ENCODE measurements at regions of chr4 and their contacts with region 1.

Region 1: GRCh38 chr4:152500800-152501434 is 35.0 kb downstream of the FBXW7 start:
- DNase-seq: peak; percentile 22
- H3K4me3 Mint-ChIP-seq: no peak overlapping the region
- H3K27ac Mint-ChIP-seq: no peak overlapping the region
- H3K4me1 Mint-ChIP-seq: peaks cover 22% of the 10 kb centered on the region
- H3K27me3 Mint-ChIP-seq: no peaks in the 10 kb centered on the region

Region 2: DNA sequence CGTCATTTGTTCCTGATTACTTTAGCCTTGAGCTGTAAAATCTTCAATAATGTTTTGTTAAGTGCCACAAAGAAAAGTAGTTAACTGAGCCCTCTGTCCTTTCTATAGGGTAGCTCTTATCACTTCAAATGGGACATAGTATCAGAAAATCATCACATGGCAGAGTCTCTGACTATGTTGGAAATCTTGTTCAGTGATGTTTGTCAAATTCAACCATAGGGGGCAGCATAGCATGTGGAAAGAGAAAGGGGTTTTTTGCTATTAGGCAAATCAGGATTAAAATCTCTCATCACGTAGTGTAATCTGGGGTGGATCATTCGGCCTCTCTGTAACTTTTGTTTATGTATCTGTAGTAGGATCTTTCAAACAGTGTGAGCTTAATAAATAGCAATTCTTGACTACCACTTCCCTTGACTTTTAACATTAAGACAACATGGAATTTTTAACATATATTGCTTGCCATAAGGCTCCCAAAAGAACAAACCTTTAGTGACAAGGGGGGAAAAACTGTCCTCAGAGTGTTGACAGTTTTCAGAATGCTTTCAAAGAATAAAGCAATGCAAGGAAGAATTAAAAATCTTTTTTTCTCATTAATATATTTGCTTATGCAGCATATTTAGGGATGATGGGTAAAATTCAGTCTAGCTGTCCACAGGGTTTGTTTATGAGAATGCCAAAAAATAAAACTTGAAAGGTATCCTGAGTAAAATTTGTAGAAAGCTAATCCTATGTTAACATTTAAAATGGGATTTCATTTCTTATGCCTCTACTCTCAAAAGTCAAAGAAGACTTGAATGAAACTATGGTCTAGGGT is 92.2 kb before region 1 on chr4:
- CTCF ChIA-PET with region 1: interaction called, 9 read pairs
- POLR2A ChIA-PET with region 1: interaction called, 3 read pairs
- intact Hi-C with region 1: loop called (anchors 2 kb)
- DNase-seq: no peak
- H3K4me3 Mint-ChIP-seq: no peak overlapping the region
- H3K27ac Mint-ChIP-seq: no peak overlapping the region
- H3K4me1 Mint-ChIP-seq: peaks cover 12% of the 10 kb centered on the region
- H3K27me3 Mint-ChIP-seq: no peaks in the 10 kb centered on the region

Region 3: GRCh38 chr4:152485726-152486276 is 15.1 kb before region 1 on chr4:
- CTCF ChIA-PET with region 1: interaction called, 26 read pairs
- POLR2A ChIA-PET with region 1: no interaction called
- intact Hi-C with region 1: loop called (anchors 1 kb)
- DNase-seq: no peak
- H3K4me3 Mint-ChIP-seq: peak overlapping the region; percentile 23
- H3K27ac Mint-ChIP-seq: no peak overlapping the region
- H3K4me1 Mint-ChIP-seq: peaks cover 39% of the 10 kb centered on the region
- H3K27me3 Mint-ChIP-seq: no peaks in the 10 kb centered on the region

Region 4: DNA sequence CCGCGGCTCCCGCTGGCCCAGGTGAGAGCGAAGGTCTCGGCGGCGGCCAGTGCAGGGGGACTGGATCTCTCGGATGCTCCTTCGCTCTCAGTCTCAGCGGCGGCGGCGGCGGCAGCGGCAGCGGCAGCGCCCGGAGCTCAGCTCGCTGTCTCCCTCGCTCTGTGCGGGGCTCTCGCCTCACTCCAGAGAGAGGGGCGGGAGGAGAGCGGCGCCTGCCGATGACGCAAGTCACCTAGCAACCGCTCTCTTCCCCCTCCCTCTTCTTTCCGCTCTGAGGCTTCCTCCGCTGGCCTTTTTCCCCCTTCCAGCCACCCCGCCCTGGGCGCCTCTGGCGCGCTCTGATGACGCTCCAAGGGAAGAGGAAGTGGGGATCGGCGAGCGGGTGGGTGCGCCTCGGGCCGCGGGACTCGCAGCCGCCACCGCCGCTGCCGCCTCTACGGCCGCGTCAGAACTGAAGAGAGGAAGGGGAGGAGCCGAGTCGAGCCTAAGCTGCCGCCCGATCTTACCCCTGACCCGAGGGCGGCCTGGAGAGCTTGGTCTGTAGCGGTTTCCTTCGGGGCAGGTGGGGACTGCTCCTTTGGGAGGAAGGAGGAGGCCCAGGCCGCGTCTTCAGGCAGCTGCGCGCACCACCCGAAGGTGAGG is 35.1 kb after region 1 on chr4 and contains the start of gene FBXW7:
- CTCF ChIA-PET with region 1: interaction called, 26 read pairs
- POLR2A ChIA-PET with region 1: interaction called, 14 read pairs
- intact Hi-C with region 1: loop called (anchors 2 kb)
- DNase-seq: peak; percentile 100
- H3K4me3 Mint-ChIP-seq: peak within 1 kb of the TSS; percentile 95
- H3K27ac Mint-ChIP-seq: peak within 1 kb of the TSS; percentile 99
- H3K4me1 Mint-ChIP-seq: peaks cover 57% of the 10 kb centered on the region
- H3K27me3 Mint-ChIP-seq: no peaks in the 10 kb centered on the region
- total RNA-seq, gene FBXW7: 35.8 to 37.8 TPM

Region 5: DNA sequence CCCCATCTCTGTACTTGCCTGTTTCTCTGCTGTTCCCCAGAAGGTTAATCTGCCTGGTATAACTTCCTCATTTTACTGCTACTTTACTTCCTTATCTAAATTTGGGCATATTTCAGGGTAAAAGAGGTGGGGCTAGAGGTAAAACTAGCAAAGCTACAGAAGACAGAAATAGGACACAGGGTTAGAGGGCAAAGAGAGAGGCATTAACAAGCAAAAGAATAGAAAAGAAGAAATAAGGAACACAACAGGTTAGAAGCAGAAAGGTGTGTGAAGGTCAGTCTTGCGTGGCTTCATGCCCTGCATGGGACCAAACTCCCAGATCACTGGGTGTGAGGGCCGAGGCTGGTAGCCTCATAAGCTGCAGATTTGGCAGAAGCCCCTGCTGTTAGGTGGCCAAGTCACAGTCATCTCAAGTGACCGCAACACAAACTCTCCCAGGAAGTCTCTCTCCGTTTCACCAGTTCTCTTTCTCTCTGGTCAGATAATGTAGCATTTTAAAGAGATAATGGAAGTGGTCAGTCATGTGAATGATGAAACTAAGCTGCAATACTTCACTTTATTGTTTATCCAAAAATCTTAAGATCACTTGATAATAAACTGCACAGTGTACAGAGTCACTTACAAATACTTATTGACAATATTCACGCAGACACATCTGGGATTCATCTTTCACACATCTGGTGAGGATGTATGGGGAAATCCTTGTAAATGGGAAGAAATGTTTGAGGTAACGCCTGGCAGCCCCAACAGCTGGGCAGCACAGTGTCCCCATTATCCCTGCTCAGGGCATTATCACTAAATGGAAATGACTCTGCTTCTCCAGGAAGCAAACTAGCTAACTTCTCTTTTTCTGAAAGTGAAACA is 162.5 kb after region 1 on chr4:
- CTCF ChIA-PET with region 1: interaction called, 10 read pairs
- POLR2A ChIA-PET with region 1: interaction called, 3 read pairs
- intact Hi-C with region 1: no loop called
- DNase-seq: no peak
- H3K4me3 Mint-ChIP-seq: no peak overlapping the region
- H3K27ac Mint-ChIP-seq: no peak overlapping the region
- H3K4me1 Mint-ChIP-seq: peaks cover 27% of the 10 kb centered on the region
- H3K27me3 Mint-ChIP-seq: no peaks in the 10 kb centered on the region

Region 6: DNA sequence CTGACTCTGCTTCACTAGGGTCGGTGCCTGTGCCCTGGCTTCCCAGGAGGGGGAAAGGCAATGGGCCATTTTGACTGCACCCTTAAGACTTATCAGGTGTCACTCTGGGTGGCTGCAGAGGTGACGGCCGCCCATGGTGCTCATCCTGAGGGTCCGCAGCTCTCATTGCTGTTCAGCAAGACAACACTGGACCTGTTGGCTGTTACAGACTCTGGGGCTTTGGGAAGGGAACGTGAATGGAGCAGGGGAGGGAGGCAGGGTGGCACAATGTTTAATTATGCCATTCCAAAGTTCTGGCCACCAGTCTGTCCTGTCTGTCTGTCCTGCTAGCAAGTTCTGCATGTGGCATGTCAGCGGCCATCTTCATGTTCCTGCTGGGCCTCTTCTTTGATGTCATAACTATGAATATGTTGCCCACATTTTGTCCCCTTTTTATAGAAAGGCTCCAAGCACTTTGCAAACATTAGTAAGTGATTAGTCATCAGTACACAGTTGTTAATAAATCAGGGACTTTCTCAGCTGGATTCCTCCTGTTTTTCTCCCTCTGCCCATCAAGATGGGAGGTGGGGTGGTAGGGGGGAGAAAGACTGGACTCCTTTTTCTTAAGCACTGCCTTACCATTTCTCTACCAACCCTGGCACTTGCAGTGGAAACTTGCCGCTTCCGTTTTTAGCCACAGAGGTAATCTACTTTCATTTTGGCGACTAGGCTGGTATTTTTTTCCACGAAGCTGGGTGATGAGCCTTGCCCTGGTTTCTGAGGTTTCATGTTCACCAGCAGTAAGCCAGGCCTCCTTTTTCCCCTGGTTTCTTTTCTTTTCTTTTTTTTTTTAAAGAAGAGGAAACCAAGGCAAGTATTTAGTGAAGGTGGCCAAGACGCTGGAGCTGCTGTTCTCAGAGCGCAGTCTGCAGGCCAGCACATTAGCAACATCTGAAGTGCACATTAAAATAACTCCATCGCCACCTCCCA is 614.7 kb after region 1 on chr4:
- CTCF ChIA-PET with region 1: no interaction called
- POLR2A ChIA-PET with region 1: no interaction called
- intact Hi-C with region 1: loop called (anchors 10 kb)
- DNase-seq: peak; percentile 89
- H3K4me3 Mint-ChIP-seq: no peak overlapping the region
- H3K27ac Mint-ChIP-seq: no peak overlapping the region
- H3K4me1 Mint-ChIP-seq: peaks cover 17% of the 10 kb centered on the region
- H3K27me3 Mint-ChIP-seq: no peaks in the 10 kb centered on the region